ENCODE measurements at regions of chr2 and their contacts with region 1.

Region 1: DNA sequence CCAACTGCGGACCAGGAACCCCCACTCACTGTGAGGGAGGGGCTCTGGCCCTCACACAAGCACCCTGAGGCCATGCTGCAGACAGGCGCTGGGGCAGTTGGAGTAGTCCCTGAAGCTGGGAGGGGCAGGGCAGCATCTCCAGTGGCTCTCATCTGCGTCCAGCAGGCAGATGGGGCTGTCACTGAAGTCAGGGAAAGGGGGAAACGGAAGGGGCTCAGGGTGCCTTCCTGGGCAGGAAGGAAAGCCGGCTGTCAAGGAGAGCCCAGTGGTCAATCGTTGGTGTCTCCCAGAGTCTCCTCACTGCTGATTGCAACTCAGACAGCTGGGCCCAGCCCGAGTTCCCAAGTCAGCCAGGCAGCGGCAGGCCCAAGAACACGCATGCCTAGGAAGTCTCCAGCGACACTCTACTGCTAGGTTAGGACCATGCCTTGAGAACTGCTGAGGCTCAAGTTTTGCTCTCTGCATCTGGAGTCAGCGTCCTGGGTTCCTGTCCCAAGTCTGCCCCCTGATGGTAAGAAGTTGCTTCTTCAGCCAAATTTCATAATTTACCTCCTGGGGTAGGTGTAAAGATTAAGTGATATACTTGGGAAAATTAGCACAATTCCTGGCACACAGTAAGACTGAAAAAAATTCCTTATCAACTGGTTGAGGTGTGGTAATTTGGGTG is 27.5 kb upstream of the NMUR1 start:
- DNase-seq: peak; percentile 85 to 86
- H3K4me3 ChIP-seq: no peak overlapping the region
- H3K27ac ChIP-seq: peak overlapping the region in 1 of 2 donors; percentile 56
- H3K4me1 ChIP-seq: peaks cover 0 to 8% (median 3%) of the 10 kb centered on the region in 4 donors
- H3K27me3 ChIP-seq: no peaks in the 10 kb centered on the region
- CTCF ChIP-seq: peak; percentile 74 to 88

Region 2: GRCh38 chr2:231483398-231484329 is 74.0 kb before region 1 on chr2:
- intact Hi-C with region 1: loop called (anchors 2 kb)
- DNase-seq: peak in 1 of 2 donors; percentile 70
- H3K4me3 ChIP-seq: peak overlapping the region; percentile 53 to 57
- H3K27ac ChIP-seq: peak overlapping the region; percentile 64 to 74
- H3K4me1 ChIP-seq: peaks cover 0 to 14% (median 4%) of the 10 kb centered on the region in 4 donors
- H3K27me3 ChIP-seq: no peaks in the 10 kb centered on the region
- CTCF ChIP-seq: no peak

Region 3: DNA sequence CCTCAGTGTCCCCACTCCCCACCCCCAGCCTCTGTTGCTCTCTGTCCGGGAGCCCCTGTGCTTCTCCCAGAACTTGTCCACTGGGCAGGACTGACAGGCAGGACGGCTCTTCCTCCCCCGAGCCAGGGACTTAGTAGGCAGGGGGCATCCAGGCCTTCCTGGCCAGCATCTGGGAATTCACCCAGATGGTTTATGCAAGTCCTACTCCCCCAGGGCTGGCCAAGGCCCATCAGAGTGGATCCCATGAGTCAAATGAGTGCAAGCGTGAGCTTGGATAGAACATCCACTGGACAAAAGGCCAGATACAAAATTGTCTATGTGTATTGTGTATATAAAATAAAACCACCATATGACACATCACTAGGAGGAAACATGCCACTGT is 34.9 kb before region 1 on chr2:
- intact Hi-C with region 1: loop called (anchors 5 kb)
- DNase-seq: no peak
- H3K4me3 ChIP-seq: no peak overlapping the region
- H3K27ac ChIP-seq: no peak overlapping the region
- H3K4me1 ChIP-seq: peaks cover 0 to 4% (median 0%) of the 10 kb centered on the region in 4 donors
- H3K27me3 ChIP-seq: no peaks in the 10 kb centered on the region
- CTCF ChIP-seq: no peak

Region 4: GRCh38 chr2:231530091-231531011 is 27.4 kb before region 1 on chr2 and contains the start of gene NMUR1:
- intact Hi-C with region 1: loop called (anchors 2 kb)
- DNase-seq: peak; percentile 30 to 66
- H3K4me3 ChIP-seq: peak within 1 kb of the TSS; percentile 39 to 52
- H3K27ac ChIP-seq: peak within 1 kb of the TSS in 1 of 2 donors; percentile 30
- H3K4me1 ChIP-seq: peaks cover 0 to 10% (median 9%) of the 10 kb centered on the region in 4 donors
- H3K27me3 ChIP-seq: peaks cover 0 to 6% of the 10 kb centered on the region in 2 donors
- CTCF ChIP-seq: peak; percentile 79 to 83

Measured in tibial artery (tissue), 4 donors.